ENCODE measurements at regions of chr10 and their contacts with region 1.

Region 1: GRCh38 chr10:123559066-123559822 is 106.9 kb upstream of the GPR26 start:
- DNase-seq: peak; percentile 74
- H3K4me3 ChIP-seq: no peak overlapping the region
- H3K27ac ChIP-seq: no peak overlapping the region
- H3K4me1 ChIP-seq: no peaks in the 10 kb centered on the region
- H3K27me3 ChIP-seq: no peaks in the 10 kb centered on the region
- CTCF ChIP-seq: peak; percentile 91 to 99 (median 97)
- EP300 ChIP-seq: no peak
- POLR2A ChIP-seq: no peak

Region 2: DNA sequence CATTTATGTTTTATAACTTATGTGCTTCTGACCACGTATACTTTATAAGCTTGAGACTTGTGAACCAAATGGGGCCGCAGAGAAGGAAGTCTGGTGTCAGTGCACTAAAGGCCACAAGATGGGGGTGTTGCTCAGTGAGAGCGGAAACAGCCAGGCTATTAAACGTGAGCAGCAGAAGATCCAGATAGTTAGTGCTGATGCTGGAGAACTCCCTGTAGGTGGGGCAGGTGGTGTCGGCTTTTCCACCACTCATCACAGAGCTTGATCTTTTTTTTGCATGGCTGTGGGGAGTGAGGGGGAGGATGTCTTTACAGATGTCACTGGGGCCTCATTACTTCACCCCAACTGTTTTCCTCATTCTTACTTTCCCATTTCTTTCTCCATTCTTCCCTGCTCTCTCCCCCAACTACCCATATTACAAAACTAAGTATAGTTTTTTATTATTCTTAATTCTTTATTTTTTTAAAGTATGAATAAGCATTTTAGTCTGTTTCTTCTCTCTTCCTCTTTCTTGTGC is 515.8 kb before region 1 on chr10:
- in situ Hi-C with region 1: loop called in 2 of 4 experiments (anchors 10 to 25 kb)
- intact Hi-C with region 1: no loop called
- DNase-seq: peak; percentile 37
- H3K4me3 ChIP-seq: no peak overlapping the region
- H3K27ac ChIP-seq: no peak overlapping the region
- H3K4me1 ChIP-seq: peaks cover 0 to 5% (median 0%) of the 10 kb centered on the region in 4 donors
- H3K27me3 ChIP-seq: no peaks in the 10 kb centered on the region
- CTCF ChIP-seq: peak; percentile 37 to 63 (median 62)
- EP300 ChIP-seq: no peak
- POLR2A ChIP-seq: no peak

Region 3: DNA sequence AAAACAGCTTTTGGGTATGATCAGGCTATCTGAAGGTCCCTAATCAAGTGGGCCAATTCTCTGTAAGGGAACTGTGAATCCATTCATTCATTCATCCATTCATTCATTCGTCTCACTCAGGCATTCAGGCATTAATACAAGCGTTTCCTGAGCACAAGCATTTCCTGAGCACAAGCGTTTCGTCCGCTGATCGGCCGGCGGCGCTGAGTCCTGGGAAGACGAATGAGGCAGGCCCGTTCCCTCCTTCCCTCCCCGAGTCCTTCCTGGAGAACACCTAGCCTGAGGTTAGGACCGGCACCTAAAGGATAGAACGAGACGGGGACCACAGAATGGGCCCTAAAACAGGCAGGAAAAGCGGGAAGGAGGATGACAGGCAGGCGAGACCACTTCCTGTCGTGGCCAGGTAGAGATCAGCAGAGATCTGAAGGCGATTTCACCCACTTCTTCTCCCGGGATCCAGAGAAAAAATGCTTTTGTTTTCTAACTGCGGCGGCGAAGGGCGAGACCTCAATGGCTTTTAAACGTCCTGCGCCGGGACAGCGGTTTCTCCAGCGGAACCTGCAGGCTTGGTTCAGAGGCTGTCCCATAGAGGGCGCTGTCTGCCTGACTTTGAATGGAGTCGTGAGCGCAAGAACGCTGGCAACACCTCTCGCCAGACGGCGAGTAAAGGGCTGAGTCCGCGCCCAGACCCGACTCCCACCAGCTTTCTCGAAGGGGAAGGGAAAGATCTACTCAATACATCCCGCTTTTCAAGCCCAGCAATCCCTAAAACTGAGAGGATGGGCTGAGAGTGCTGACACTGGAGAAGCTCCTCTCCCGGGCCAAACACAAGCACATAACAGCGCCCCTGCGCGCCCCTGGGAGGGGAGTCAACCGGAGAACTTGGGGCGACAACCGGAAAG is 426.4 kb before region 1 on chr10:
- in situ Hi-C with region 1: loop called (anchors 10 to 25 kb)
- intact Hi-C with region 1: loop called (anchors 5 kb)
- DNase-seq: peak; percentile 88
- H3K4me3 ChIP-seq: peak overlapping the region in 1 of 4 donors; percentile 30
- H3K27ac ChIP-seq: no peak overlapping the region
- H3K4me1 ChIP-seq: peaks cover 22 to 47% (median 40%) of the 10 kb centered on the region in 4 donors
- H3K27me3 ChIP-seq: peaks cover 100% of the 10 kb centered on the region
- CTCF ChIP-seq: peak; percentile 89 to 93 (median 92)
- EP300 ChIP-seq: no peak
- POLR2A ChIP-seq: no peak

Region 4: GRCh38 chr10:124197371-124198124 is 638.3 kb after region 1 on chr10:
- in situ Hi-C with region 1: no loop called
- intact Hi-C with region 1: no loop called
- DNase-seq: no peak
- H3K4me3 ChIP-seq: no peak overlapping the region
- H3K27ac ChIP-seq: peak overlapping the region; percentile 7 to 31 (median 20)
- H3K4me1 ChIP-seq: no peaks in the 10 kb centered on the region
- H3K27me3 ChIP-seq: no peaks in the 10 kb centered on the region
- CTCF ChIP-seq: no peak
- EP300 ChIP-seq: no peak
- POLR2A ChIP-seq: no peak

Measured in transverse colon (tissue), 4 donors.